ENCODE measurements at regions of chr14 and their contacts with region 1.

Region 1: GRCh38 chr14:64434528-64434927 is 30.8 kb upstream of the AKAP5 start:
- H3K4me3 ChIP-seq: no peak overlapping the region
- H3K27ac ChIP-seq: no peak overlapping the region
- H3K4me1 ChIP-seq: no peaks in the 10 kb centered on the region
- CTCF ChIP-seq: no peak

Region 2: GRCh38 chr14:64387694-64388532 is 46.6 kb before region 1 on chr14 and contains the start of gene MTHFD1:
- CTCF ChIA-PET with region 1: interaction called, 14 read pairs
- POLR2A ChIA-PET with region 1: interaction called, 4 read pairs
- H3K4me3 ChIP-seq: peak within 1 kb of the TSS; percentile 47
- H3K27ac ChIP-seq: peak within 1 kb of the TSS; percentile 94
- H3K4me1 ChIP-seq: 0 out of 2 replicates have a peak, but pooled peaks cover 2% of the 10 kb centered on the region
- CTCF ChIP-seq: no peak

Region 3: DNA sequence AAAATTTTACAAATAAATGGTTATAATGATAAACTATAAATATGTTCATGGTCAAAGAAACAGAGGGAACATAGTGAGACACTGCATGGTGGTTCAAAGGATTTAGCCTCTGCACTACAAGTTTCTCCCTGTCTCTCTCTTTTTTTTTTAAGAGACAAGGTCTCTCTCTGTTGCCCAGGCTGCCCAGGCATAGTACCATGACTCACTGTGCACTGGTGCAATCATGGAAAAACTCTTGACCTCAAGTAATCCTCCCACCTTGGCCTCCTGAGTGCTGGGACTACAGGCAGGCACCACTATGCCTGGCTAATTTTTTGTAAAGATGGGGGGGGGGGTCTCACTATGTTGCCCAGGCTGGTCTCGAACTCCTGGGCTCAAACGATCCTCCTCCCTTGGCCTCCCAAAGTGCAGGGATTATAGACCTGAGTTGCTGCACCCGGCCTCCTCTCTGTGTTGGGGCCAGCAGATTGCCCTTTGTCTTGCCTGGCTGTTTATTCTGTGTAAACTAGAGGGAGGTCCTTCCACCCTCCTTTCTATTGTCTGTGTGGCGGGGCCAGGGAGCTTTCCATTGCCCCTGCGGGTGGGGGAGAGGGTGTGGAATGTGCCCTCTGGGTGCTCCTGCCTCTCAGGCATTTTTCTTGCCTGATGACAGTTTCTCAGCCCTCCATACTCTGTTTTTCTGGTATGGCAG is 24.3 kb before region 1 on chr14:
- CTCF ChIA-PET with region 1: interaction called, 13 read pairs
- POLR2A ChIA-PET with region 1: no interaction called
- H3K4me3 ChIP-seq: no peak overlapping the region
- H3K27ac ChIP-seq: no peak overlapping the region; the same call in 1 of the 2 replicates
- H3K4me1 ChIP-seq: no peaks in the 10 kb centered on the region
- CTCF ChIP-seq: no peak

Region 4: DNA sequence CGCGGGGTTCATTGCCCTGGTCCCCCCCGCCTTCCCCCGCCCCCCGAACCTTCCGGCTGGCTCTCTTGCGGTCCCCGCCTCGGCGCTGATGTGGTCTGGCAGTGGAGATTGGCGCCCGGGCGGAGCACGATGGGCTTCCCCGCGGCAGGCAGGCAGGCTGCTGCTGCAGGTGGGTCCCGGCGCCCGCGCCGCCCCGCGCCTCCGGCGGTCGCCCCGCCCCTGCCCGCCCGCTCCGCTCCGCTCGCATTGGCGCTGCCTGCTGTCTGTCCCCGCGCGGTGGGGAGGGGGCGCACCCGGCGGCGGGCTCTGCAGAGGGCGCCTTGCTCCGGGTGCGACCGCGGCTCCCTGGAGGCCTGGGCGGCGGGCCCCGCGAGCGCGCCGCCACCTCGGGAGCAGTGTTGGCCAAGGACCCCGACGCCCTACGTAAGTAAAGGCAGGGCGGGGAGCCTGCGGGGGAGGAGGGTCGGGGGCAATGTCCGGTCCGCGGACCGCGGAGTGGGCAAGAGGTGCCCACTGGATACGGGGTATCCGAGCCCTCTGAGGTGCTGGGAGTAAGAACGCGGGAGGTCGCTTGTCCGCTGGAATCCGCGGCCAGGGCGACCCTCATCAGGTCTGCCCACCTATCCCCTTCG is 30.8 kb after region 1 on chr14 and contains the start of gene AKAP5:
- CTCF ChIA-PET with region 1: interaction called, 14 read pairs
- POLR2A ChIA-PET with region 1: no interaction called
- H3K4me3 ChIP-seq: peak within 1 kb of the TSS; percentile 56
- H3K27ac ChIP-seq: peak within 1 kb of the TSS; percentile 3; the same call in 1 of the 2 replicates
- H3K4me1 ChIP-seq: peaks cover 10% of the 10 kb centered on the region; the same call in 1 of the 2 replicates
- CTCF ChIP-seq: no peak

Region 5: GRCh38 chr14:64510825-64511671 is 76.5 kb after region 1 on chr14:
- CTCF ChIA-PET with region 1: interaction called, 14 read pairs
- POLR2A ChIA-PET with region 1: no interaction called
- H3K4me3 ChIP-seq: no peak overlapping the region
- H3K27ac ChIP-seq: no peak overlapping the region
- H3K4me1 ChIP-seq: peaks cover 9% of the 10 kb centered on the region
- CTCF ChIP-seq: 0 out of 2 replicates have a peak, but pooled peaks have one; percentile 28